HCT116 (cell line): ENCODE measurements at regions of chr22 and their contacts with region 1.

Region 1: GRCh38 chr22:29394931-29395581 is 6.7 kb upstream of the AP1B1 start:
- DNase-seq: peak; percentile 48
- ATAC-seq: peak; percentile 98
- H3K4me3 ChIP-seq: no peak overlapping the region
- H3K27ac ChIP-seq: no peak overlapping the region
- H3K4me1 ChIP-seq: peaks cover 8 to 20% of the 10 kb centered on the region in 2 experiments
- H3K27me3 ChIP-seq: no peaks in the 10 kb centered on the region
- CTCF ChIP-seq: peak; percentile 79 to 91 (median 90)
- POLR2A ChIP-seq: no peak
- RAD21 ChIP-seq: peak; percentile 89

Region 2: GRCh38 chr22:29524440-29525191 is 129.6 kb after region 1 on chr22:
- CTCF ChIA-PET with region 1: interaction called, 10 read pairs
- POLR2A ChIA-PET with region 1: no interaction called
- RAD21 ChIA-PET with region 1: interaction called in 1 of 2 experiments, 3 read pairs
- intact Hi-C with region 1: loop called (anchors 1 kb)
- DNase-seq: no peak
- ATAC-seq: peak; percentile 94
- H3K4me3 ChIP-seq: no peak overlapping the region
- H3K27ac ChIP-seq: no peak overlapping the region
- H3K4me1 ChIP-seq: no peaks in the 10 kb centered on the region
- H3K27me3 ChIP-seq: no peaks in the 10 kb centered on the region
- CTCF ChIP-seq: peak; percentile 35 to 54 (median 49); a peak in 5 of 6 replicates
- POLR2A ChIP-seq: no peak
- RAD21 ChIP-seq: peak; percentile 55; the same call in 1 of the 2 replicates